Activated CD4-positive, alpha-beta memory T cell treated with anti-CD3 and anti-CD28 coated beads for 36 hours (primary cell): ENCODE measurements at regions of chr14 and their contacts with region 1.

Region 1: GRCh38 chr14:55026793-55027561 is at the starts of genes SOCS4 and WDHD1:
- DNase-seq: peak; percentile 98
- H3K4me3 Mint-ChIP-seq: peak within 1 kb of the TSS; percentile 93
- H3K27ac Mint-ChIP-seq: peak within 1 kb of the TSS; percentile 89
- H3K4me1 Mint-ChIP-seq: peaks cover 44% of the 10 kb centered on the region
- H3K27me3 Mint-ChIP-seq: no peaks in the 10 kb centered on the region
- total RNA-seq, gene SOCS4: 24.4 to 25.3 TPM
- total RNA-seq, gene WDHD1: 62.4 to 63.2 TPM

Region 2: GRCh38 chr14:54981698-54982097 is 45.3 kb before region 1 on chr14:
- CTCF ChIA-PET with region 1: no interaction called
- POLR2A ChIA-PET with region 1: no interaction called
- intact Hi-C with region 1: no loop called
- DNase-seq: no peak
- H3K4me3 Mint-ChIP-seq: no peak overlapping the region
- H3K27ac Mint-ChIP-seq: no peak overlapping the region
- H3K4me1 Mint-ChIP-seq: no peaks in the 10 kb centered on the region
- H3K27me3 Mint-ChIP-seq: no peaks in the 10 kb centered on the region

Region 3: DNA sequence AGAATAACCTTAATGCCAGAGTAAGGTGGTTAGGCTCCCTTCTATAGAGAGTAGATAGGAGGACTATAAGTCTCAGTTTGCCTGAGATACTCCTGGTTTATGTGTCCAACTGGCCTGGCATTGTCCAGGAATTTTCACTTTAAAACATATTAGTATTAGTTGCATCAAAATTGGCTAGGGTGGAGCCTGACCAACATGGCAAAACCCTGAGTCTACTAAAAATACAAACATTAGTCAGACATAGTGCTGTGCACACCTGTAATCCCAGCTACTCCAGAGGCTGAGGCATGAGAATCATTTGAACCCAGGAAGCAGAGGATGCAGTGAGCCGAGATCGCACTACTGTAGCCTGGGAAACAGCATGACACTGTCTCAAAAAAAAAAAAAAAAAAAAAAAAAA is 12.0 kb before region 1 on chr14:
- CTCF ChIA-PET with region 1: no interaction called
- POLR2A ChIA-PET with region 1: interaction called, 10 read pairs
- intact Hi-C with region 1: no loop called
- DNase-seq: no peak
- H3K4me3 Mint-ChIP-seq: no peak overlapping the region
- H3K27ac Mint-ChIP-seq: no peak overlapping the region
- H3K4me1 Mint-ChIP-seq: no peaks in the 10 kb centered on the region
- H3K27me3 Mint-ChIP-seq: no peaks in the 10 kb centered on the region

Region 4: DNA sequence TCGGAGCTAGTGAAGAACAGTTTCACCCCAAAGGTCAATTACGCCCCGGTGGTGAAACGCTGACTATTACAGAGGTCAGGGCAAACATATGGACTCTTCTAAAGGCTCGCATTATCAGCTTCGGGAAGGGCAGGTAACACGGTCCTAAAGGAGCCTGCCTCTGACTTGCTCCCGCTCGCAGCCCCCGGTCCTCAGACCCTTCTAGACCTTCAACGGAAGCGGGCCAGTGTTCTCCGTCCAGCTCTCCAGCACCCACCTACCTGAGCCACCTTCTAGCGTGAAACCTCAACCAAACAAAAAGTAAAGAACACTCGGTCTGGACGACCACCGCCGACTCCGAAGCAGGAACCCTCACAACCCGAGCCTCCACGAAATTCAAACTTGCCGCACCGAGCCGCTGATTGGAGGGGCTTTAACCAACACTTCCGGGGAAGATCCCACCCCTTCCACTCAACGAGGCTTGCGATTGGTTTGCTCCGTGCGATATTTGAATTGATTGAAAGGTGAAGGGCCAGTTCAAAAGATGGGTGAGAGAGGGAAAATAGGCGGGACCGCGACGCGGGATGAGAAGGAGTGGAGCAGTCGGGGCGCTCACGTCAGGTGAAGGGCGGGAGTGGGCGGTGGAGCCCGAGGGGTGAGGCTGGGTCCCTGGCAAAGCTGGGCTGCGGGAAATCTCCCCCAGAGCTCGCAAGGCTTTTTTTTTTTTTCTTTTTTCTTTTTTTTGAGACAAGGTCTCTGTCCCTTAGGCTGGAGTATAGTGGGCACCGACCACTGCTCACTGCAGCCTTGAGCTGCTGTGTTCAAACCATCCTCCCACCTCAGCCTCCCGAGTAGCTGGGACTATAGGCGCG is 164.5 kb after region 1 on chr14 and contains the start of gene DLGAP5:
- CTCF ChIA-PET with region 1: interaction called, 4 read pairs
- POLR2A ChIA-PET with region 1: interaction called, 8 read pairs
- intact Hi-C with region 1: loop called (anchors 1 kb)
- DNase-seq: peak; percentile 96
- H3K4me3 Mint-ChIP-seq: peak within 1 kb of the TSS; percentile 89
- H3K27ac Mint-ChIP-seq: peak within 1 kb of the TSS; percentile 79
- H3K4me1 Mint-ChIP-seq: peaks cover 27% of the 10 kb centered on the region
- H3K27me3 Mint-ChIP-seq: no peaks in the 10 kb centered on the region
- total RNA-seq, gene DLGAP5: 92.7 to 97.9 TPM